Right ventricle myocardium superior (tissue), 1 donor: ENCODE measurements at regions of chr19 and their contacts with region 1.

Region 1: DNA sequence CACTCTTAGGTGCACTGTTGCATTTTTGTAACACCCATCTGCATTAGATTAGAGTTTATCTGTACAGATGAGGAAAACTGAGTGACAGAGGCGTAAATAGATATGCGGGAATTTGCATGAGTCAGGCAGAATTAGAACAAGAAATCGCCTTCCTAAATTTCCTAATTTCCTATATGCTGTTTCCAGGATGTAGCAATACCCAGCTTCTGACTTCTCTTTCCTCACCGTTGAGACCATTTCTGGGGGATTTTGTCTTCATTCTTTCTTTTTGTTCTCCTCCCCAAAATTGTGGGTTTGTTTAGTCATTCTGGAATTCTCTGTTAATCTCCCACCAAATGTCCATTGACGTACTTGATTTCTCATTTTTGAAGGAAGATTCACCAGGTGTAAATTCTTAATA is 10.6 kb upstream of the ZNF792 start:
- DNase-seq: no peak
- ATAC-seq: no peak

Region 2: GRCh38 chr19:34692549-34692948 is 282.1 kb before region 1 on chr19:
- intact Hi-C with region 1: no loop called
- DNase-seq: no peak
- ATAC-seq: no peak

Region 3: DNA sequence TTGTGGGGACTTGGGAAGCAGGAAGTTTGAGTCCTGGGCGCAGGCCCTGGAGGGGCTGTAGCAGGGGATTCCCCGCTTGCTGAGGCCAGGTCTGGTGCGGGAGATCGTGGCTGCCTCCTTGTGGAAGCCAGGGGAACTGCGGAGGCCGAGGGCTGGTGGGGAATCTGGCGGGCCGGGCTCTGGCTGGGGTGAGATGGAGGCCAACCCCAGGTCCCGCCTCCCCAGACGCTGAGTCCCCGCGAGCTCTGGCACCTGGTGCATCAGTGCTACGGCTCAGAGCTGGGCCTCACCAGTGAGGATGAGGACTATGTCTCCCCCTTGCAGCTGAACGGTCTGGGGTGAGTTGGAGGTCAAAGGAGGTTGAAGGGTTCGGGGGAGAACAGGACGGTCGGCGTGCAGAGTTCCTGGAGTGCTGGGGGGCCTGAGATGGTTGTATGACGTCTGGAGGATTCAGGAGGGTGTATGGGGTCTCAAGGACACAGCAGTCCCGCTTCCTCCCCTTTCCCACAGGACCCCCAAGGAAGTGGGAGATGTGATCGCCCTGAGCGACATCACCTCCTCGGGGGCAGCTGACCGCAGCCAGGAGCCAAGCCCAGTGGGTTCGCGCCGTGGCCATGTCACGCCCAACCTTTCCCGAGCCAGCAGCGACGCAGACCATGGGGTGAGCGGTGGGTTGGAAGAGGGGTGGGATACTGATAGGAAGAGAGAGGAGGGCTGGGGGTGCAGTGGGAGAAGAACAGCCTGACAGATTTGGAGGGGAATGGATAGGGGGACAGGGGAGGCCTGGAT is 38.6 kb after region 1 on chr19:
- intact Hi-C with region 1: loop called (anchors 2 kb)
- DNase-seq: peak; percentile 88
- ATAC-seq: peak; percentile 79

Region 4: DNA sequence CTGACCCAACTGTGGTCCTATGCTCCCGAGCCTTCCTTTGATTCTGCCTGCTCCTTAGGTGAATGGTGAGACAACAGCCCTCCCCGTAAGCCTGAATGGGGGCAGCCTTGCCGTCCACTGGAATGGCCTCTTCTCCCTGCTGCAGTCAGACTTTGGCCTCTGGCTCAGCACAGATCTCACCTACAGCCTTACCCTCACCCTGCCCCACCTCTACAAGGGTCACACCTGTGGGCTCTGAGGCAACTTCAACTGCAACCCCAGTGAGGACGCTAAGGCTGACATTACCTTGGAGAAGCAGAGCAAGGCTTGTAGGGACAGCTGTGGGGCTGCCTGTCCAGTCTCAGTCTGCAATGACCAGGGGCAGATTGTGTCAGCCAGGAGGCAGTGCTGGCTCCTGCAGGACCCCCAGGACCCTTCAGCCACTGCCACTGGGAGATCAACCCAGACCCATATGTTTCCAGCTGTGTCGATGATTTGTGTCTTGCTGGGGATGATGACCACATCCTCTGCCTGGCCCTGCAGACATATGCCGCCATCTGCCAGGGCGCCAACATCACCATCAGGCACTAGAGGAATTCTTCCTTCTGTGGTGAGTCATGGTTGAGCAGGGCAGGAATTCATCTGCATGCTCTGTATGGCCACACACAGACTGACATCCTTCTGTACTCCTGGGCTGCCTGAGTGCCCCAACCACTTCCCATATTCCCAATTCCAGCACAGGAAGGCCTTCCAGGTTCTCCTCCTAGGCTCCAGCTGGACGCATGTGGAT is 113.7 kb after region 1 on chr19:
- intact Hi-C with region 1: loop called (anchors 5 kb)
- DNase-seq: no peak
- ATAC-seq: no peak